Testis (tissue), 5 donors: ENCODE measurements at regions of chr7 and their contacts with region 1.

Region 1: GRCh38 chr7:45157653-45158401 is at the start of gene RAMP3:
- DNase-seq: no peak
- H3K4me3 ChIP-seq: peak within 1 kb of the TSS; percentile 42 to 60
- H3K27ac ChIP-seq: no peak within 1 kb of the TSS
- H3K4me1 ChIP-seq: peaks cover 3% of the 10 kb centered on the region
- H3K27me3 ChIP-seq: no peaks in the 10 kb centered on the region
- CTCF ChIP-seq: no peak
- POLR2A ChIP-seq: no peak
- total RNA-seq, gene RAMP3: 17.0 to 23.8 TPM

Region 2: DNA sequence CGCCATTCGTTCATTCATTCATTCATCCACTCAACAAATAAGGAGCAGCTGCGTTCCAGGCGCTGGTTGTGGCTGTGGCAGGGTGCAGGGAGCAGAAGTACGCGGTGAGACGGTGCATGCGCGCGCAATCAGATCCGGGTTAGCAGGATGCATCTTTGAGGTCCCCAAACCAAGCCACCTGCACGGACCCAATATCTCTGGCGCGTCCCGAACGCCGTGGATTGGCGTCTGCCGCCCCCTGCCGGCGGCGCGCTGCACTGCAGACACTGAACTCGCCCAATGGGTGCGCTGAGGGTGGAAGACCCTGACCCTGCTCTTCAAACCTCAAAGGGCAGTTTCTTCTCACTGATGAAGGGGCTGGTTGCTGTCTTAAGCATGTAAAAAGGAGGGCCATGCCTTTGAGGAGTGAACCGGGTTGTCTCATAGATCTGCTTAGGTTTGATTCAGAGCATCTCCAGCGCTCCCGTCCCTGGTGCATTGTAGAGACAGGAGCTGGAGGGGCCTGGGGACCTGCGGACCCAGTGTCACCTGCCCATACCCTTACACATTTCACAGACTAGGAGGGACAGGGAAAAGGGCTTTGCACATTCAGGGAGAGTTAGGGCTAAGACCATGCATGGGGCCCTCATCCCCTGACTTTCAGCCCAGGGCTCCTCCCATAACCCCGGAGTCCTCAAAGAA is 102.3 kb after region 1 on chr7:
- intact Hi-C with region 1: loop called (anchors 5 kb)
- DNase-seq: peak; percentile 78
- H3K4me3 ChIP-seq: no peak overlapping the region
- H3K27ac ChIP-seq: no peak overlapping the region
- H3K4me1 ChIP-seq: no peaks in the 10 kb centered on the region
- H3K27me3 ChIP-seq: no peaks in the 10 kb centered on the region
- CTCF ChIP-seq: peak; percentile 89 to 98 (median 89)
- POLR2A ChIP-seq: no peak